Psoas muscle (tissue), 8 donors: ENCODE measurements at regions of chr2 and their contacts with region 1.

Region 1: GRCh38 chr2:239688122-239688681 is 287.4 kb upstream of the HDAC4 start:
- DNase-seq: no peak
- ATAC-seq: peak in 2 of 4 donors; percentile 35 to 48
- H3K4me3 ChIP-seq: no peak overlapping the region
- H3K27ac ChIP-seq: no peak overlapping the region
- H3K4me1 ChIP-seq: peaks cover 21% of the 10 kb centered on the region
- H3K27me3 ChIP-seq: no peaks in the 10 kb centered on the region
- CTCF ChIP-seq: no peak

Region 2: DNA sequence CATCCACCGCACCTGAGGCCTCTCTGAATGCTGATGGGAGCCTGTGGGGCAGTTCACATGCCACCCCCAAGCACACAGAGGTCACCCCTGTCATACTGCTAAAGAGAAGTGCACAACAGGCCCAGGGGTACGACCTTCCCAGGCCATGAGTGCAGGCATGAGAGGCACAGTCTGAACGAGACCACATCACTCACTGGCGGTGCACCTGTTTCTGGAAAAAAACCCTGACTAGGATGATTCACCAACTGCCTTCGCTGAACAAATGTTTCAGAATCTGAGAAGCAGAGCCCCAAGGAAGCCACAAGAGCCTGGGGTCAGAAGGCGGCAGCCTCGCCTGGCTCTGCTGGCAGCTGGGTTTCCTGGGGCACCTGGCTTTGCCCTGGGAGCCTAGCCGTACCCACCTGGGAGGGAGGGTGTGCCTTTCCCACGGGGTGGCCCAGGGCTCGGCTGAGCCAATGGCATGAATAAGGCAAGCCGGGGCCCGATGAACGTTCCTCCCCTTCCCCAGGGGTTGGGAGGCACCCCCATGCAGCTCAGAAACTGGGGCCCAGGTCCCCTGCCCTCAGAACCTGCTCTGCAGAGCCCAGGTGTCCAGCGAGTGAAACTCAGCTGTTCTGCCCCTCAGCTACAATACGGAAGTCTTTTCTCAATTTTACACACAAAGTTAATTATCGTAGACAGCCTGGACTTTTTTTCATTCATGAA is 361.2 kb before region 1 on chr2:
- intact Hi-C with region 1: loop called in 1 of 2 experiments (anchors 5 kb)
- DNase-seq: peak; percentile 56 to 80
- ATAC-seq: peak; percentile 44 to 58 (median 53)
- H3K4me3 ChIP-seq: no peak overlapping the region
- H3K27ac ChIP-seq: peak overlapping the region; percentile 96
- H3K4me1 ChIP-seq: peaks cover 55% of the 10 kb centered on the region
- H3K27me3 ChIP-seq: no peaks in the 10 kb centered on the region
- CTCF ChIP-seq: no peak

Region 3: GRCh38 chr2:239630618-239631286 is 57.5 kb before region 1 on chr2:
- intact Hi-C with region 1: loop called in 1 of 2 experiments (anchors 5 kb)
- DNase-seq: peak; percentile 68 to 83
- ATAC-seq: peak; percentile 99 to 100 (median 100)
- H3K4me3 ChIP-seq: no peak overlapping the region
- H3K27ac ChIP-seq: peak overlapping the region; percentile 39
- H3K4me1 ChIP-seq: no peaks in the 10 kb centered on the region
- H3K27me3 ChIP-seq: no peaks in the 10 kb centered on the region
- CTCF ChIP-seq: no peak